ENCODE measurements at regions of chr6 and their contacts with region 1.

Region 1: GRCh38 chr6:43396407-43397149 is 27.1 kb upstream of the ZNF318 start:
- DNase-seq: no peak
- ATAC-seq: no peak
- H3K4me3 ChIP-seq: no peak overlapping the region
- H3K27ac ChIP-seq: no peak overlapping the region
- H3K4me1 ChIP-seq: peaks cover 6% of the 10 kb centered on the region; the same call in 1 of the 2 replicates
- H3K27me3 ChIP-seq: no peaks in the 10 kb centered on the region
- CTCF ChIP-seq: no peak
- EP300 ChIP-seq: no peak
- POLR2A ChIP-seq: no peak
- RAD21 ChIP-seq: no peak

Region 2: GRCh38 chr6:43269273-43270007 is 127.1 kb before region 1 on chr6:
- CTCF ChIA-PET with region 1: interaction called, 56 read pairs
- POLR2A ChIA-PET with region 1: interaction called, 5 read pairs
- RAD21 ChIA-PET with region 1: interaction called, 22 read pairs
- SMC1A ChIA-PET with region 1: interaction called, 14 read pairs
- in situ Hi-C with region 1: no loop called
- intact Hi-C with region 1: no loop called
- DNase-seq: no peak
- ATAC-seq: peak; percentile 52
- H3K4me3 ChIP-seq: no peak overlapping the region
- H3K27ac ChIP-seq: no peak overlapping the region
- H3K4me1 ChIP-seq: peaks cover 19% of the 10 kb centered on the region
- H3K27me3 ChIP-seq: no peaks in the 10 kb centered on the region
- CTCF ChIP-seq: no peak
- EP300 ChIP-seq: no peak
- POLR2A ChIP-seq: no peak
- RAD21 ChIP-seq: no peak

Region 3: GRCh38 chr6:44151348-44152108 is 755.0 kb after region 1 on chr6:
- CTCF ChIA-PET with region 1: no interaction called
- POLR2A ChIA-PET with region 1: no interaction called
- RAD21 ChIA-PET with region 1: no interaction called
- SMC1A ChIA-PET with region 1: no interaction called
- in situ Hi-C with region 1: no loop called
- intact Hi-C with region 1: no loop called
- DNase-seq: no peak
- ATAC-seq: peak; percentile 98
- H3K4me3 ChIP-seq: no peak overlapping the region
- H3K27ac ChIP-seq: no peak overlapping the region
- H3K4me1 ChIP-seq: no peaks in the 10 kb centered on the region; the same call in 1 of the 2 replicates
- H3K27me3 ChIP-seq: no peaks in the 10 kb centered on the region
- CTCF ChIP-seq: peak; percentile 92 to 99 (median 99); a peak in 5 of 6 replicates
- EP300 ChIP-seq: no peak
- POLR2A ChIP-seq: no peak; the same call in 1 of the 2 replicates
- RAD21 ChIP-seq: peak; percentile 79